H1 (cell line): ENCODE measurements at regions of chr18 and their contacts with region 1.

Region 1: GRCh38 chr18:34809451-34810072 is 99.5 kb downstream of the DTNA start:
- DNase-seq: peak in 1 of 2 experiments; percentile 82
- H3K4me3 ChIP-seq: no peak overlapping the region
- H3K27ac ChIP-seq: no peak overlapping the region
- H3K4me1 ChIP-seq: peaks cover 0 to 7% (median 2%) of the 10 kb centered on the region in 4 experiments; a peak in 1 of 7 replicates
- H3K27me3 ChIP-seq: no peaks in the 10 kb centered on the region
- CTCF ChIP-seq: peak; percentile 53 to 81 (median 55)
- EP300 ChIP-seq: no peak
- POLR2A ChIP-seq: no peak
- RAD21 ChIP-seq: peak; percentile 57 to 70

Region 2: DNA sequence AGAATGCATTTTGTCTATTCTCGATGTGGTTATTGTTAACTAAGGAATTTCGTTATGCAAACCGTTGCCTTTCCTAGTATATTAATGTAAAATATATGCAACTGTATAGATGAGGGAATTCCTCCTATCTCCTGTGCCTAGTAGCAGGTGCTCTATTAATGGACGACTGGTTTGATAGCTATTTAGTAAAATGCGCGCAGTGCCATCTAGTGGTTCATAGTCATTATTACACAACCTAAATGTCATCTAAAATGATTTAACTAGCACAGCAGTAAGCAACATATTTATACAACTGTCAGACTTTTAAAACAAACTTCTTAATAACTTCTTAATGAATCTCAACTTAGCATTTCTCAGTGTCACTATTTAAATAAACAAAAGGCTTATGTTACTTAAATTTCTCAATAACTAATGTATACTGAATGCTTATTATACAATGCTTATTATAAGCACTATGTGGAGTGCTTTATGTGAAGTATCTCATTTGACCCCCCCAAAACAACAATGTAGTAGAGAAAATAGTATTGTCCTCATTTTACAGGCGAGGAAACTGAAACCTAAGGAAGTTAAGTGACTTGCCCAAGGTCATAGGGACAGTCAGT is 21.5 kb before region 1 on chr18:
- CTCF ChIA-PET with region 1: interaction called, 11 read pairs
- POLR2A ChIA-PET with region 1: no interaction called
- DNase-seq: no peak
- H3K4me3 ChIP-seq: no peak overlapping the region
- H3K27ac ChIP-seq: no peak overlapping the region
- H3K4me1 ChIP-seq: no peaks in the 10 kb centered on the region; a peak in 1 of 7 replicates
- H3K27me3 ChIP-seq: peaks cover 0 to 1% (median 0%) of the 10 kb centered on the region in 4 experiments; a peak in 1 of 7 replicates
- CTCF ChIP-seq: peak in 2 of 3 experiments; percentile 67; a peak in 3 of 4 replicates
- EP300 ChIP-seq: no peak
- POLR2A ChIP-seq: no peak
- RAD21 ChIP-seq: peak; percentile 86 to 88

Region 3: DNA sequence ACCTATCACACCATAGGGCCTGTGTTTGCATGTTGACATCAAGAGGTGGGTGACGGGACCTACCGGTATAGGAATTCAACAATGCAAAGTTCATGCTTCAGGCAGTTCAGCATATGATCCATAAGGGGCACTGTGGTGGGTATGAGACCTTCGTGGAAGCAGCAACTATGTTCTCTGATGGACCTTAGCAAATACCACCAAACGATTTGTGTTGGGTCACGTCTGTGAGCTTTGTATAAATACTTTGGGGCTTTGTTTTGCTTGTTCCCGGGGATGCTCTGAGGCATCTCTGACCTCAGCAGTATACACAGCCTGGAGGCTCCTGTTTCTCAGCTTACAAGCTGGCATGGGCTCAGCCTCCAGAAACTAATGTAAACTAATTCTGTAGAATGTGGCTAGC is 12.2 kb after region 1 on chr18:
- CTCF ChIA-PET with region 1: interaction called, 31 read pairs
- POLR2A ChIA-PET with region 1: no interaction called
- DNase-seq: no peak
- H3K4me3 ChIP-seq: no peak overlapping the region
- H3K27ac ChIP-seq: no peak overlapping the region
- H3K4me1 ChIP-seq: peaks cover 0 to 6% (median 0%) of the 10 kb centered on the region in 4 experiments; a peak in 2 of 7 replicates
- H3K27me3 ChIP-seq: no peaks in the 10 kb centered on the region
- CTCF ChIP-seq: peak in 1 of 3 experiments; percentile 49; a peak in 2 of 4 replicates
- EP300 ChIP-seq: no peak
- POLR2A ChIP-seq: no peak
- RAD21 ChIP-seq: no peak

Region 4: GRCh38 chr18:35005963-35006577 is 196.5 kb after region 1 on chr18:
- CTCF ChIA-PET with region 1: no interaction called
- POLR2A ChIA-PET with region 1: no interaction called
- DNase-seq: no peak
- H3K4me3 ChIP-seq: no peak overlapping the region
- H3K27ac ChIP-seq: no peak overlapping the region
- H3K4me1 ChIP-seq: peaks cover 0 to 2% (median 0%) of the 10 kb centered on the region in 4 experiments; a peak in 1 of 7 replicates
- H3K27me3 ChIP-seq: no peaks in the 10 kb centered on the region
- CTCF ChIP-seq: peak in 2 of 3 experiments; percentile 57 to 61; a peak in 3 of 4 replicates
- EP300 ChIP-seq: no peak
- POLR2A ChIP-seq: no peak
- RAD21 ChIP-seq: peak; percentile 82 to 89